ENCODE measurements at regions of chr4 and their contacts with region 1.

Region 1: GRCh38 chr4:147096667-147097604 is 151.3 kb upstream of the TTC29 start:
- DNase-seq: peak in 1 of 2 donors; percentile 72
- H3K4me3 ChIP-seq: no peak overlapping the region
- H3K27ac ChIP-seq: no peak overlapping the region
- H3K4me1 ChIP-seq: peaks cover 0 to 6% (median 0%) of the 10 kb centered on the region in 4 donors
- H3K27me3 ChIP-seq: peaks cover 0 to 4% (median 4%) of the 10 kb centered on the region in 3 donors
- CTCF ChIP-seq: peak in 5 of 7 experiments; percentile 30 to 66 (median 57)
- EP300 ChIP-seq: no peak
- POLR2A ChIP-seq: no peak

Region 2: DNA sequence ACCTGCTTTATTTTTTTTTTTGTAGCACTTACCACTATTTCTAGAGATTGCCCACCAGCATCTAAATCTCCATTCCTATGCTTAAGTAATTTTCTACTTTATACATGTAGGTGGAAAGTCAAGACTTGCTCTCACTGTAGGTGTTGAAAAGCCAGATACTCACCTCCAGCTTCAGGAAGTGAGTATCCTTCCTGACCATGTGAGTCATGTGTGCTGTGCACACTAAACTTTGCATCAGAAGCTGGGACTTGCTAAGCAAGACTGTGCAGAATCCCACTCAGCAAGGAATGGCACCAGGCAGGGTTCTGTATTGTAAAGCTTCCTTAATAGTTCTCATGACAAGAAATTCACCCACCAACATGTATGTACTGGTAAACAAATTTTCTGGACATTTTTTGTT is 306.4 kb before region 1 on chr4:
- intact Hi-C with region 1: no loop called
- DNase-seq: no peak
- H3K4me3 ChIP-seq: no peak overlapping the region
- H3K27ac ChIP-seq: no peak overlapping the region
- H3K4me1 ChIP-seq: no peaks in the 10 kb centered on the region
- H3K27me3 ChIP-seq: no peaks in the 10 kb centered on the region
- CTCF ChIP-seq: no peak
- EP300 ChIP-seq: no peak
- POLR2A ChIP-seq: no peak

Region 3: GRCh38 chr4:146915132-146915531 is 181.8 kb before region 1 on chr4:
- intact Hi-C with region 1: no loop called
- DNase-seq: no peak
- H3K4me3 ChIP-seq: no peak overlapping the region
- H3K27ac ChIP-seq: no peak overlapping the region
- H3K4me1 ChIP-seq: no peaks in the 10 kb centered on the region
- H3K27me3 ChIP-seq: no peaks in the 10 kb centered on the region
- CTCF ChIP-seq: no peak
- EP300 ChIP-seq: no peak
- POLR2A ChIP-seq: no peak

Region 4: GRCh38 chr4:147019061-147019460 is 77.9 kb before region 1 on chr4:
- intact Hi-C with region 1: loop called (anchors 5 kb)
- DNase-seq: peak; percentile 64 to 70
- H3K4me3 ChIP-seq: no peak overlapping the region
- H3K27ac ChIP-seq: no peak overlapping the region
- H3K4me1 ChIP-seq: no peaks in the 10 kb centered on the region
- H3K27me3 ChIP-seq: peaks cover 0 to 6% (median 0%) of the 10 kb centered on the region in 3 donors
- CTCF ChIP-seq: peak in 5 of 7 experiments; percentile 33 to 68 (median 43)
- EP300 ChIP-seq: no peak
- POLR2A ChIP-seq: no peak